ENCODE measurements at regions of chr18 and their contacts with region 1.

Region 1: DNA sequence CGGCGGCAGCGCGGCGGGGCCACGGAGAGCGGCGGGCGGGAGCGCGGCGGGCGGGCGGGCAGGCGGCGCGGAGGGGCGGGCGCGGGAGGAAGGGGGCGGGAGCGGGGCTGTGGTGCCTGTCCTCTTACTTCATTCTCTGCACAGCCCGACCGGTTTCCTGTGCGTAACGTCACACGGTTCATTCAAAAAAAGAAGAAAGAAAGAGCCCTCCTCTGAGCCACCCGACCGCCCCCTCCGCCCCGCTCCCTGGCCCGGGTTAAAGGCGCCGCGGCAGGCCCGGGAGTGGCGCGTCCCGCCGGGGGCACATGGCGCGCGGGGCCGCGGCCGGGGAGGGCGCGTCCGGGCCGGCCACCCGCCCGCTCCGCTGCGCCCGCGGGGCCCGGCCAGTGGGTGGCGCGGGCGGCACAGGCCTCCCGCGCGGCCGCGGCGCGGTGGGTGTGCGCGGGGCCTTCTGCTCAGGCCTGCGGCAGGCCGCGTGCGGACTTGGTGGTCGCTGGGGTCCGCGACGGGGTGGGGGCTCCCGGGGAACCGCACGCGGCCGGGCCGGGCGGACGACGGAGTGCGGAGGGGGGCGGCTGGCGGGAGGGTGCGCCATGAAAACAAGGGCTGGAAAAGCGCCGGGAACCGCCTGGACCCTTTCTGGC is 599 bp upstream of the BCL2 start:
- DNase-seq: peak; percentile 71
- H3K4me3 ChIP-seq: peak overlapping the region; percentile 4 to 66 (median 43)
- H3K27ac ChIP-seq: peak overlapping the region; percentile 44
- H3K4me1 ChIP-seq: peaks cover 25% of the 10 kb centered on the region
- H3K27me3 ChIP-seq: peaks cover 0 to 9% of the 10 kb centered on the region in 2 experiments
- CTCF ChIP-seq: no peak
- POLR2A ChIP-seq: no peak

Region 2: DNA sequence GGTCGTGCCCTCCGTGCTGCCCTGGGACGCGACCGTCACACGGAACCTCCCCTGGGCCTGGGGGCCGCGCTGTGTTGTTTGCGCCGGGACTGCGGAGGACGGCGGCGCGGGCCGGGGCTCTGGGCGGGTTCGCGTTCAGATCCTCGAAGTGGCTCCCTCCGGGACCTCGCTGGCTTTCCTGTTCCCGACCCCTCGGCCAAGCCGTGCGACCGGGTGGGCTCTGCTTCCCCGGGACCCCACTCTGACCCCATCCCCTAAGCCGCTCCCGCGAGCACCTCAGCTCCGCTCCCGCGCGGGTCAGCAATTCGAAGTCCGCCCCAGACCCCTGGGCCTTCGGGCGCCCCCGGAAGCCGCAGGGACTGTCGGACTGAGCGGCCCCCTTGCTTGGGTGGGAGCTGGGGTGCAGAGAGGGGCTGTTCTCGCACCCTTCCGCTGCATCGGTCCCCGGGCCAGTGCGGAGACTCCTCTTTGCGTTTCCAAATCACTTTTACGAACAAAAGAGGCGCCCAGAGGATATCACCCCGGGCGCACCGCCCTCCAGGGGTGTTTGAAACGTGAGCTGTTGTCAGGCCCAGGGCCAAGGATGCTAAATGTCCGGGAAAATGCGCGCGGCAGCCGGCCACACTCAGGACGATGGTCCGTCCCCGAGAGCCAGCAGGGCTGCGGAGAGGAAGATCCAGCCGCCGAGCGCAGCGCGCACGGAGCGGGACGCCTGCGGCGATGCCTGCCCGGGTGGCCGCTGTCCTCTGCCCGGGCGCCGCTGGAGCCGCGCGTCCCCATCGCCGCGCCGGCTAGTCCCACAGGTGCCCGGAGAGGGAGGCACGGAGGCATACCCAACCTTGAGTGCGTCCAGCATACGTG is 723.8 kb before region 1 on chr18:
- CTCF ChIA-PET with region 1: no interaction called
- POLR2A ChIA-PET with region 1: no interaction called
- dilution Hi-C with region 1: no loop called
- intact Hi-C with region 1: loop called (anchors 10 kb)
- DNase-seq: no peak
- H3K4me3 ChIP-seq: peak overlapping the region; percentile 8 to 29 (median 29)
- H3K27ac ChIP-seq: no peak overlapping the region
- H3K4me1 ChIP-seq: peaks cover 4% of the 10 kb centered on the region
- H3K27me3 ChIP-seq: peaks cover 19 to 35% of the 10 kb centered on the region in 2 experiments
- CTCF ChIP-seq: no peak
- POLR2A ChIP-seq: no peak

Region 3: DNA sequence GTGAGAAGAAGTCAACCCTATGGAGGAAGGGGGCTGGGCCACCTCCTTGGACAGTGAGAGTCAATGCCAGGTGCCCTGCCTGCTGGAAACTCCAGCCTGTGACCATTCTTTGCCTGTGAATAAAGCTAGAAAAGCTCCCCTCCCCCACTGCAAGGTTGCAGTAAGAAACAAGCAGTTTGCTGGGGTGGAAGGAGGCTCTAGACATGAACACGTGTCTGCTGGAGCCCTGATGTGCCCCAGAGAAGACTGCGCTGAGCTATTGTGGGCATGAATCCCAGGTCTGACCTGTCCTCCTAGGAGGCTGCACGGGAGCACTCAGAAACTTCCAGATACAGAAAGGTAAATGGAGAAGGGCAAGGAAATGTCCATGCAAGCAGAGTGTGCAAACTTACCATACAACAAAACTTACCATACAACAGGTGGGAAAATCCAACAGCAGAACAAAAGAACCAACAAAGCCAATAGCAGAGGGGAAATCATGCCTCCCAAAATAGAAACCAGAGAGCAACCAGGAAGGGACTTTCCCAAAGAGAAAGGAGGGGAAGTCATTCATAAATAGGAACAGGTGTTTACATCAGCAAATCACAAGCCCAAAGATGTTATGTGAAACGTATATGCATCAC is 279.3 kb before region 1 on chr18:
- CTCF ChIA-PET with region 1: no interaction called
- POLR2A ChIA-PET with region 1: no interaction called
- dilution Hi-C with region 1: no loop called
- intact Hi-C with region 1: no loop called
- DNase-seq: no peak
- H3K4me3 ChIP-seq: no peak overlapping the region
- H3K27ac ChIP-seq: no peak overlapping the region
- H3K4me1 ChIP-seq: no peaks in the 10 kb centered on the region
- H3K27me3 ChIP-seq: peaks cover 3 to 6% of the 10 kb centered on the region in 2 experiments
- CTCF ChIP-seq: no peak
- POLR2A ChIP-seq: no peak

Region 4: DNA sequence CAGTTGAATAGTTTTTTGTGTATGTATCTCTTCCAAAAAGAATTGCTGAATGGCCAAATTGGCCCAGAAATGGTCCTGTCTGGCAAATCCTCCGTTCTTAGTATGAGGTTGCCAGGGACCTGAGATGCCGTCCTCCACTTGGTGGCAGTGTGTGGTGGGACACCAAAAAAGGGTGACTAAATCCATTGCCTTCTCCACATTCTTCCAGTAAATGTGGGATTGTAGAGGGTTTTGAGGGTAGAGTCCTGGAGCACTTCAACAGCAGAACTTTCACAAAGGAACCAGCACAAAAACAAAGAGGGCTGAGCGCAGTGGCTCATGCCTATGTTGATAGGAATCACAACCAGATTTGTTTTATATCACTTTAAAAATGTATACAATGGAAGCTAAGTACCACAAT is 200.5 kb before region 1 on chr18:
- CTCF ChIA-PET with region 1: interaction called, 24 read pairs
- POLR2A ChIA-PET with region 1: no interaction called
- dilution Hi-C with region 1: no loop called
- intact Hi-C with region 1: loop called (anchors 1 kb)
- DNase-seq: peak; percentile 37
- H3K4me3 ChIP-seq: no peak overlapping the region
- H3K27ac ChIP-seq: no peak overlapping the region
- H3K4me1 ChIP-seq: no peaks in the 10 kb centered on the region
- H3K27me3 ChIP-seq: peaks cover 7 to 47% of the 10 kb centered on the region in 2 experiments
- CTCF ChIP-seq: peak in 1 of 2 donors; percentile 35
- POLR2A ChIP-seq: no peak

Region 5: DNA sequence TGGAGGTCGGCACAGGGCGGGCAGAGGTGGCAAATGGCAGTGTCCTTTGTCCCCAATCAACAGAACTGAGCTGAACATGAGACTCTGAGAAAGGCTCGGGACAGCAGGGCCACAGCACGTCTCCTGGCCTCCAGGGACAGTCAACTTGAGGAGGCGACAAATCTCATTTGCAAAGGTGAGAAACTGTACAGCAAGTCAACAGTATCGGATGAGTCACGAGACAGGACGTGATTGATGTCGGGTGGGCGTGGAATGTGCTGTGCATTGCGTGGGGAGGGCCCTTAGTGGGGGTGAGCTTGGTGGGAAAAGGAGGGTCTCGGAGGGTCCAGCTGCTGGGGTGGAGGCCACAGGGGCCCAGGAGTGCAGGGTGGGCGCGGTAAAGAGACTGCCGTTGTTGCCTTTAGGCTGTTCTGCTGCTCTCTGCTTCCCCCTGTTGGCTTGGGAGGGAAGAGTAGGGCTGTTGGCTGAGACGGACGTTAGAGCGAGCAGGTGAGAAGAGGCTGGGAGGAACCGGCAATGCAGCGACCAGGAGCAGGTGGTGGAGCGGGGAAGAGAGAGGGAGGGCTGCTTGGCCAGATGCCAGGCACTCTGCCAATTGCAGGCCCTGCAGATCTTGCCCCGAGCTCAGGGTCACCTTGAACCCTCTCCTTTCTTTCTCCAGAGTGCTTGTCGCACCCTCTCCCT is 164.9 kb before region 1 on chr18:
- CTCF ChIA-PET with region 1: interaction called, 6 read pairs
- POLR2A ChIA-PET with region 1: no interaction called
- dilution Hi-C with region 1: no loop called
- intact Hi-C with region 1: loop called (anchors 2 kb)
- DNase-seq: peak; percentile 57
- H3K4me3 ChIP-seq: no peak overlapping the region
- H3K27ac ChIP-seq: no peak overlapping the region
- H3K4me1 ChIP-seq: no peaks in the 10 kb centered on the region
- H3K27me3 ChIP-seq: peaks cover 14% of the 10 kb centered on the region in 2 experiments
- CTCF ChIP-seq: peak; percentile 77 to 94
- POLR2A ChIP-seq: no peak

Region 6: GRCh38 chr18:63339920-63340484 is 19.8 kb after region 1 on chr18:
- CTCF ChIA-PET with region 1: interaction called, 13 read pairs
- POLR2A ChIA-PET with region 1: no interaction called
- dilution Hi-C with region 1: no loop called
- intact Hi-C with region 1: no loop called
- DNase-seq: peak; percentile 40
- H3K4me3 ChIP-seq: no peak overlapping the region
- H3K27ac ChIP-seq: no peak overlapping the region
- H3K4me1 ChIP-seq: no peaks in the 10 kb centered on the region
- H3K27me3 ChIP-seq: no peaks in the 10 kb centered on the region
- CTCF ChIP-seq: peak; percentile 46 to 49
- POLR2A ChIP-seq: no peak

Region 7: GRCh38 chr18:63439334-63439733 is 119.2 kb after region 1 on chr18:
- CTCF ChIA-PET with region 1: interaction called, 15 read pairs
- POLR2A ChIA-PET with region 1: no interaction called
- dilution Hi-C with region 1: no loop called
- intact Hi-C with region 1: loop called (anchors 1 kb)
- DNase-seq: peak; percentile 78
- H3K4me3 ChIP-seq: no peak overlapping the region
- H3K27ac ChIP-seq: no peak overlapping the region
- H3K4me1 ChIP-seq: no peaks in the 10 kb centered on the region
- H3K27me3 ChIP-seq: peaks cover 4 to 12% of the 10 kb centered on the region in 2 experiments
- CTCF ChIP-seq: peak; percentile 63 to 71
- POLR2A ChIP-seq: no peak

Measured in endothelial cell of umbilical vein (primary cell).